K562 (cell line): ENCODE measurements at regions of chr4 and their contacts with region 1.

Region 1: DNA sequence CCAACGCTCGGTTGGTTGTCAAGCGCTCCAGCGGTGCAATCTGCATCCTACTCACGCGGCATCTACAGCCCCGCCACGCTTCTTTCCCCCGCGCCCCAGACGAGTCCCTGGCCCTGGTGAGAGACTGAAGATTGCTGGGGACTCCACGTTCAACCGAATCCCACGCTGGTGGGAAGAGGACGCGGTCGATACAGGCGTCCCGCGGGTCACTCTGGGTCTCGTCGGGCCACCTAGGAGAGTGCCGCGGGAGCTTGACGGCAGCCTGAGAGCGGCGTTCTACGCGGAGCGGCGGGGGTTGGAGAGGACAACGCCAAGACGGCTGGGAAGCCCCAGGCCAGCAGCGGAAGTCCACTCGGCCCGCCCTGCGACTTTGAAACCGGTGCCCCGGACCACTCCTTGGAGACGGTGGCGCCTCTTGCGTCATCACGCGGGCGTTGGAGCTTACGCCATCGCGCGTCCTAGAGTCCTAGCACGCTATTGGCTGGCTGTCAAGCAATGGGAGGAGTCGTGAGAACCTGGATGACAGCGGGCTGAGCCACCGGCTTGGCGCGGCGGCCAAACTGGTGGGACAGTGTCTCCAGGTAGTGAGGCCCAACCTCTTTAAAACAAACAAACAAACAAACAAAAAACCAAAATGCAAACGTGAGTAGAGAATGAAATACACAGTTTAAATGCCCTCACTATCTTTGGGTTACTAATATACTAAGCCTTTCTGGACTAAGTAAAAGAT is at the start of gene SCLT1:
- DNase-seq: peak; percentile 93 to 99 (median 94)
- ATAC-seq: peak; percentile 86
- H3K4me3 ChIP-seq: peak within 1 kb of the TSS; percentile 68
- H3K27ac ChIP-seq: peak within 1 kb of the TSS; percentile 93
- H3K4me1 ChIP-seq: peaks cover 0 to 5% of the 10 kb centered on the region in 2 experiments; a peak in 4 of 5 replicates
- H3K27me3 ChIP-seq: no peaks in the 10 kb centered on the region
- CTCF ChIP-seq: no peak
- EP300 ChIP-seq: peak; percentile 38; the same call in 1 of the 2 replicates
- POLR2A ChIP-seq: peak; percentile 95
- RAD21 ChIP-seq: no peak
- polyA plus RNA-seq, gene SCLT1: 8.0 to 8.6 TPM

Region 2: DNA sequence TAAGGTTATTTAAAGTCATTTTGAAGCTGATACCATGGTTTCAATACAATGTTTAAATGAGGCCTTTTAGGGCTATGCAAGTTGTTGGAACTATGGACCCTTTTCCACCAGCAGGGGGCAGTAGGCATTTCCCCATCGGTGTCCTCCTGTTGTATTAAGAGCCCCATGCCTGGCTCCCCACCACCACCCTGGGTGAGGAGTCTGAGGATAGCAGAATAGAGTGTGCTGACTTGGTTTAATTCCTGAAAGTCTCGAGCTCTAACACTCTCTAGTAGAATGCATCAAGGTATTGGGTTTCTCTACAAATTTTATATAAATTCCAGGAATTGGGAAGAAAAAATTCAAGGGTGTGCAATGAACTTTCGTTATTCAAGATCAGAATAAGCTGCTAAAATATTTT is 518.6 kb before region 1 on chr4:
- CTCF ChIA-PET with region 1: no interaction called
- POLR2A ChIA-PET with region 1: no interaction called
- in situ Hi-C with region 1: no loop called
- intact Hi-C with region 1: loop called (anchors 10 kb)
- DNase-seq: peak; percentile 79 to 89 (median 80)
- ATAC-seq: peak; percentile 96
- H3K4me3 ChIP-seq: no peak overlapping the region
- H3K27ac ChIP-seq: no peak overlapping the region
- H3K4me1 ChIP-seq: peaks cover 6 to 8% of the 10 kb centered on the region in 2 experiments; a peak in 3 of 5 replicates
- H3K27me3 ChIP-seq: no peaks in the 10 kb centered on the region
- CTCF ChIP-seq: peak; percentile 75 to 90 (median 85)
- EP300 ChIP-seq: peak; percentile 11; the same call in 1 of the 2 replicates
- POLR2A ChIP-seq: no peak
- RAD21 ChIP-seq: peak; percentile 84

Region 3: DNA sequence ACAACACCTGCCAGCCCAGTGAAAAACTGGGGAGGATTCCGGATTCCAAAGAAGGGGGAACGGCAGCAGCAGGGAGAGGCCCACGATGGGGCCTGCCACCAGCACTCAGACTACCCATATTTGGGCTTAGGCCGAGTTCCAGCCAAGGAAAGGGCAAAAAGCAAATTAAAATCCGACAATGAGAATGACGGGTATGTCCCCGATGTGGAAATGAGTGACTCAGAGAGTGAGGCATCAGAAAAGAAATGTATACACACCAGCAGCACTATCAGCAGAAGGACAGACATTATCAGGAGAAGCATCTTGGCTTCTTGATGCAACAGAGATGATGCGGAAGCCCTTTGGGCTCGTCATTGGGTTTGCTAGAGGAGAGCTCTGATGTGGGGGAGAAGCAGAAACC is 221.4 kb before region 1 on chr4:
- CTCF ChIA-PET with region 1: no interaction called
- POLR2A ChIA-PET with region 1: no interaction called
- in situ Hi-C with region 1: no loop called
- intact Hi-C with region 1: loop called (anchors 10 kb)
- DNase-seq: peak in 1 of 4 experiments; percentile 10
- ATAC-seq: no peak
- H3K4me3 ChIP-seq: no peak overlapping the region
- H3K27ac ChIP-seq: no peak overlapping the region
- H3K4me1 ChIP-seq: no peaks in the 10 kb centered on the region
- H3K27me3 ChIP-seq: no peaks in the 10 kb centered on the region
- CTCF ChIP-seq: no peak
- EP300 ChIP-seq: no peak
- POLR2A ChIP-seq: no peak
- RAD21 ChIP-seq: no peak

Region 4: DNA sequence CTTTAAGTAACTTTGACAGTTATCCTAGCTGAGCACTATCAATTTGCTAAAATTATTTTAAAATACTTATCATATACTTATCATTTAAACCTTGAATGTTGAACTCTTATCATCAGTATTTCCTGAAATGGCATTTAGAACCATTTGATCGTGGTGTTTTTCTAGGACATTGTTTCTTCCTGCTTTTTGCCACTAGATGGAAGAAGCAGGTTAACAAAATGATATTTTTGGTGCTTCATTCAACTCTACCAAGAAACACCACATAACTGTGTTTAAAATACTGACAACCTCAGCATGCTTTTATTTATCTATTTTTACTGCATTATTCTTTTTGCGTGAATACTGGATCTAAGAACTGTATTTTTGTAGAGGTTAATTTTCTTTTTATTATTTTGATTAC is 47.2 kb after region 1 on chr4:
- CTCF ChIA-PET with region 1: no interaction called
- POLR2A ChIA-PET with region 1: interaction called, 6 read pairs
- in situ Hi-C with region 1: no loop called
- intact Hi-C with region 1: loop called (anchors 1 kb)
- DNase-seq: no peak
- ATAC-seq: no peak
- H3K4me3 ChIP-seq: no peak overlapping the region
- H3K27ac ChIP-seq: no peak overlapping the region
- H3K4me1 ChIP-seq: peaks cover 0 to 4% of the 10 kb centered on the region in 2 experiments; a peak in 2 of 5 replicates
- H3K27me3 ChIP-seq: peaks cover 0 to 15% of the 10 kb centered on the region in 2 experiments; a peak in 4 of 5 replicates
- CTCF ChIP-seq: peak in 1 of 3 experiments; percentile 40; a peak in 1 of 6 replicates
- EP300 ChIP-seq: no peak
- POLR2A ChIP-seq: no peak
- RAD21 ChIP-seq: peak; percentile 20 to 25; a peak in 2 of 4 replicates

Region 5: GRCh38 chr4:129240816-129241215 is 147.5 kb after region 1 on chr4:
- CTCF ChIA-PET with region 1: no interaction called
- POLR2A ChIA-PET with region 1: no interaction called
- in situ Hi-C with region 1: no loop called
- intact Hi-C with region 1: no loop called
- DNase-seq: no peak
- ATAC-seq: no peak
- H3K4me3 ChIP-seq: no peak overlapping the region
- H3K27ac ChIP-seq: no peak overlapping the region
- H3K4me1 ChIP-seq: no peaks in the 10 kb centered on the region
- H3K27me3 ChIP-seq: no peaks in the 10 kb centered on the region; a peak in 1 of 5 replicates
- CTCF ChIP-seq: no peak
- EP300 ChIP-seq: no peak
- POLR2A ChIP-seq: no peak
- RAD21 ChIP-seq: no peak

Region 6: GRCh38 chr4:129561886-129562285 is 468.5 kb after region 1 on chr4:
- CTCF ChIA-PET with region 1: no interaction called
- POLR2A ChIA-PET with region 1: no interaction called
- in situ Hi-C with region 1: no loop called
- intact Hi-C with region 1: no loop called
- DNase-seq: no peak
- ATAC-seq: no peak
- H3K4me3 ChIP-seq: no peak overlapping the region
- H3K27ac ChIP-seq: no peak overlapping the region
- H3K4me1 ChIP-seq: no peaks in the 10 kb centered on the region
- H3K27me3 ChIP-seq: no peaks in the 10 kb centered on the region
- CTCF ChIP-seq: no peak
- EP300 ChIP-seq: no peak
- POLR2A ChIP-seq: no peak
- RAD21 ChIP-seq: no peak